Ovary (tissue), 10 donors: ENCODE measurements at regions of chr2 and their contacts with region 1.

Region 1: GRCh38 chr2:73163483-73164367 is 38.6 kb upstream of the NOTO start:
- DNase-seq: peak; percentile 49 to 79 (median 74)
- H3K4me3 ChIP-seq: no peak overlapping the region
- H3K27ac ChIP-seq: no peak overlapping the region
- H3K4me1 ChIP-seq: no peaks in the 10 kb centered on the region
- H3K27me3 ChIP-seq: no peaks in the 10 kb centered on the region
- CTCF ChIP-seq: peak; percentile 61 to 73 (median 62)
- EP300 ChIP-seq: no peak
- POLR2A ChIP-seq: no peak

Region 2: GRCh38 chr2:72887754-72888437 is 275.8 kb before region 1 on chr2:
- intact Hi-C with region 1: loop called in 2 of 4 experiments (anchors 5 kb)
- DNase-seq: peak; percentile 87 to 93 (median 90)
- H3K4me3 ChIP-seq: peak overlapping the region; percentile 47
- H3K27ac ChIP-seq: peak overlapping the region; percentile 74 to 79
- H3K4me1 ChIP-seq: peaks cover 7% of the 10 kb centered on the region
- H3K27me3 ChIP-seq: no peaks in the 10 kb centered on the region
- CTCF ChIP-seq: peak; percentile 68 to 80 (median 78)
- EP300 ChIP-seq: no peak
- POLR2A ChIP-seq: no peak

Region 3: GRCh38 chr2:72993147-72993932 is 170.4 kb before region 1 on chr2:
- intact Hi-C with region 1: loop called in 3 of 4 experiments (anchors 5 to 10 kb)
- DNase-seq: peak in 2 of 5 donors; percentile 7 to 23
- H3K4me3 ChIP-seq: no peak overlapping the region
- H3K27ac ChIP-seq: no peak overlapping the region
- H3K4me1 ChIP-seq: no peaks in the 10 kb centered on the region
- H3K27me3 ChIP-seq: no peaks in the 10 kb centered on the region
- CTCF ChIP-seq: peak; percentile 24 to 64 (median 36)
- EP300 ChIP-seq: no peak
- POLR2A ChIP-seq: no peak